ENCODE measurements at regions of chr18 and their contacts with region 1.

Region 1: GRCh38 chr18:22378672-22379282 is 38.9 kb downstream of the CTAGE1 start:
- ATAC-seq: peak in 4 of 8 experiments; percentile 62 to 73 (median 66)
- H3K4me3 ChIP-seq: no peak overlapping the region
- H3K27ac ChIP-seq: no peak overlapping the region
- H3K4me1 ChIP-seq: no peaks in the 10 kb centered on the region

Region 2: DNA sequence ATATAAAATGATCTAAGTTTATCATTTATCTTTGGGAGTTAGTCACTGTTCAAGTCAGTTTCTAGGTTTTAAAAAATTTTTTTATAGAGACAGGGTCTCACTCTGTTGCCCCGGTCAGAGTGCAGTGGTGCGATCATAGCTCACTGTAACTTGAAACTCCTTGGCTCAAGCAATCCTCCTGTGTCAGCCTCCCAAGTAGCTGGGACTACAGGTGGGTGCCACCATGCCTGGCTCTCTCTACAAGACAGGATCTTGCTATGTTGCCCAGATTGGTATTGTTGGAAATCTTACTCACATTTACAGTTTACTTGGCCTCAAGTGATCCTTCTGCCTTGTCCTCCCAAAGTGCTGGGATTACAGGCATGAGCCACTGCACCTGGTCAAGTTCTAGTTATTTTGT is 563.7 kb before region 1 on chr18:
- in situ Hi-C with region 1: no loop called
- ATAC-seq: no peak
- H3K4me3 ChIP-seq: no peak overlapping the region
- H3K27ac ChIP-seq: no peak overlapping the region
- H3K4me1 ChIP-seq: no peaks in the 10 kb centered on the region

Region 3: DNA sequence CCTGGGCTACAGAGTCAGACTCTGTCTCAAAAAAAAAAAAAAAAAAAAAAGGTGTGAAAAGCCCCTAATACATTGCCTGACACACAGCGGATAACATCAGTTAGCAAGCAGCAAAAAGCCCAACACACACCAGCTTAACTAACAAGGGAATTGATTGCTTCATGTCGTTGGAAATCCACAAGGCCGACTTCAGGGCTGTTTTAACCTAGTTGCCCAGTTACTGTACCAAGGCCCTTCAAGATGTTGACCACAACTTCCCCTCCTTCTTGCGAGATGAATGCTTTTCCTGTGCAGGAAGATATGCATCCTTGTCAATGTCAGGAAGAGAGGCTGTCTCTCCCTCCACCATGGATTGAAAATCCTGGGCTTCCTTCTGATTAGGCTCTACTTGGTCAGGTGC is 435.3 kb before region 1 on chr18:
- in situ Hi-C with region 1: no loop called
- ATAC-seq: no peak
- H3K4me3 ChIP-seq: no peak overlapping the region
- H3K27ac ChIP-seq: no peak overlapping the region
- H3K4me1 ChIP-seq: no peaks in the 10 kb centered on the region

Region 4: GRCh38 chr18:22282311-22283112 is 96.3 kb before region 1 on chr18:
- in situ Hi-C with region 1: loop called in 1 of 9 experiments (anchors 25 kb)
- ATAC-seq: peak in 7 of 8 experiments; percentile 36 to 91 (median 63)
- H3K4me3 ChIP-seq: no peak overlapping the region
- H3K27ac ChIP-seq: no peak overlapping the region
- H3K4me1 ChIP-seq: peaks cover 0 to 3% of the 10 kb centered on the region in 2 donors

Region 5: DNA sequence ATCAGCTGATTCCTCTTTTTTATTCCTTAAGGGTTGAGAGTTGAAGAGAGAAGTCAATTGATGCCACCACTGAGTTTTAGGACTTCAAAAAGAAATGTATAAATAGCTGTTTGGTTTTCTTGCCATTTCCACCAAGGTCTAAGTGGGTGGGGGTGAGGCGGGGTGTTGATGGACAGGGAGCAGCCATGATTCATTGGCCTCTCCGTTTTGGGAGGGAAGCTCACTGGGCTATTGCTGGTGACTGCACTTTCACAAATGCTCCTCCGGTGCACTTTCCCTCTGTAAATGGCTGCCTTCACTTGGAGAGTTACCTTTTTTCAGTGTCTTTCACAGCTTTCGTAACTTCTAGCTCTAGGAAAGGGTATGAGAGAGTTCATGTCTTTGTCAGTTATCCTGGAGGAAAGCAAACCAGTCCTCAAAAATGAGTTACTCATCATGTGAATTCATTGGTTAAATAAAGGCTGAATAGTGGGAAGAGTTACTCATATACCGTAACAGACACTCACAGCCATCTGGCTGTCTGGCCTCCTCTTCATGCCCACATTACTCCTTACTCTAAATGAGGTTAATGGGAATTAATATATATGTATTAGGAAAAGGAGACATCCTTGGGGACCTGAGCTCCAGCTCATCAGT is 56.3 kb after region 1 on chr18:
- in situ Hi-C with region 1: no loop called
- ATAC-seq: peak in 2 of 8 experiments; percentile 36 to 63
- H3K4me3 ChIP-seq: no peak overlapping the region
- H3K27ac ChIP-seq: no peak overlapping the region
- H3K4me1 ChIP-seq: no peaks in the 10 kb centered on the region